Activated T-helper 2 cell treated with anti-CD3 and anti-CD28 coated beads, Interferon-gamma antibody, Interleukin-2, Interleukin-4, amounts not matched to agents 10 μg/mL and 5 μg/mL and 100 μg/mL, durations not matched to agents 14 hours and 24 hours and 36 hours (primary cell): ENCODE measurements at regions of chr18 and their contacts with region 1.

Region 1: GRCh38 chr18:45169610-45170009 is 445.7 kb upstream of the SLC14A2 start:
- DNase-seq: no peak
- H3K4me3 Mint-ChIP-seq: no peak overlapping the region
- H3K27ac Mint-ChIP-seq: no peak overlapping the region
- H3K4me1 Mint-ChIP-seq: peaks cover 10% of the 10 kb centered on the region
- H3K27me3 Mint-ChIP-seq: peaks cover 5% of the 10 kb centered on the region

Region 2: GRCh38 chr18:45106331-45106774 is 63.3 kb before region 1 on chr18:
- intact Hi-C with region 1: loop called (anchors 10 kb)
- DNase-seq: no peak
- H3K4me3 Mint-ChIP-seq: no peak overlapping the region
- H3K27ac Mint-ChIP-seq: no peak overlapping the region
- H3K4me1 Mint-ChIP-seq: no peaks in the 10 kb centered on the region
- H3K27me3 Mint-ChIP-seq: peaks cover 5% of the 10 kb centered on the region

Region 3: DNA sequence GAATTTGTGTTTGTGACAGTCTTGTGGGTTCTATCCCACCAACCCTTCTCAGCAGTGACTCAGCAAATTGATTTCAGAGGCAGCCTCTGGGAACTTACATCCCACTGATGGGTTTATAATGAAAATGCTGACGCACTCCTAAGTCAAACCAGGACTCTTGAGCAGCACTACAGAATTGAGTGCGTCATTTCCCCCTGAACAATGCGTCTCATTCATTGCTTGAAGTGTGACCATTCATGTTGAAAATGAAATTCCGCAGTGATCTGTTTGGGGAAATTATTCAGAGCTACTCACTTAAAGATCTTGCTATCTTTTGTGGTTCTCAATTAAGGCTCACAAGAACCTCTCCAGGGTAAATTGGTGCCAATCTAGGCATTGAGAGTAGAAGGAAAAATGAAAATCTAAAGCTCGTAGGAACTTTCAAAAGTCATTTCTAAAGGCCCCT is 27.9 kb after region 1 on chr18:
- intact Hi-C with region 1: no loop called
- DNase-seq: no peak
- H3K4me3 Mint-ChIP-seq: no peak overlapping the region
- H3K27ac Mint-ChIP-seq: no peak overlapping the region
- H3K4me1 Mint-ChIP-seq: peaks cover 1% of the 10 kb centered on the region
- H3K27me3 Mint-ChIP-seq: peaks cover 11% of the 10 kb centered on the region